Ovary (tissue), 10 donors: ENCODE measurements at regions of chr10 and their contacts with region 1.

Region 1: GRCh38 chr10:111598436-111599059 is 521.7 kb downstream of the ADRA2A start:
- DNase-seq: peak; percentile 10 to 57 (median 34)
- H3K4me3 ChIP-seq: no peak overlapping the region
- H3K27ac ChIP-seq: no peak overlapping the region
- H3K4me1 ChIP-seq: no peaks in the 10 kb centered on the region
- H3K27me3 ChIP-seq: no peaks in the 10 kb centered on the region
- CTCF ChIP-seq: peak; percentile 41 to 52 (median 44)
- EP300 ChIP-seq: no peak
- POLR2A ChIP-seq: no peak

Region 2: GRCh38 chr10:109906316-109906715 is 1692.2 kb before region 1 on chr10:
- intact Hi-C with region 1: loop called in 1 of 4 experiments (anchors 5 kb)
- DNase-seq: no peak
- H3K4me3 ChIP-seq: no peak overlapping the region
- H3K27ac ChIP-seq: no peak overlapping the region
- H3K4me1 ChIP-seq: peaks cover 13% of the 10 kb centered on the region
- H3K27me3 ChIP-seq: no peaks in the 10 kb centered on the region
- CTCF ChIP-seq: no peak
- EP300 ChIP-seq: no peak
- POLR2A ChIP-seq: no peak

Region 3: DNA sequence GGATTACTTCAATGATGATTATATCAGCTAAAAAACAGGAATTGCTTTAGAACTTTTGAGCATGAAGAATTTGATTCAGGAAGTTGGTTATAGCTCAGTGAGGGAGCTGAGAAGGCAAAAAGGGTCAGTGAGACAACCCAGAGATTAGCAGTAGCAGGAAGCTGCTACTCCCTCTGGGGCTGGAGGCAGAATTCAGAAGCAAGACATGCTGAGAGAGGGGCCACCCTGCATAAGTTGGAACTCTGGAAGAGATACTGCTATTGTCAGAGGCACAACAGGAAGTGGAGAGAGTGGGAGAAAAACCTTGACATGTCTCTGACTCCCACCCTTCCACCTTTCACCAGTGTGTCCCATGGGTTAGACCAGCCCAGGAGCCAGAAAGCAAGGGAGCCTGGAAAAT is 33.0 kb before region 1 on chr10:
- intact Hi-C with region 1: loop called in 1 of 4 experiments (anchors 2 kb)
- DNase-seq: no peak
- H3K4me3 ChIP-seq: no peak overlapping the region
- H3K27ac ChIP-seq: no peak overlapping the region
- H3K4me1 ChIP-seq: no peaks in the 10 kb centered on the region
- H3K27me3 ChIP-seq: no peaks in the 10 kb centered on the region
- CTCF ChIP-seq: no peak
- EP300 ChIP-seq: no peak
- POLR2A ChIP-seq: no peak

Region 4: GRCh38 chr10:111879969-111880368 is 281.4 kb after region 1 on chr10:
- intact Hi-C with region 1: no loop called
- DNase-seq: no peak
- H3K4me3 ChIP-seq: no peak overlapping the region
- H3K27ac ChIP-seq: no peak overlapping the region
- H3K4me1 ChIP-seq: no peaks in the 10 kb centered on the region
- H3K27me3 ChIP-seq: no peaks in the 10 kb centered on the region
- CTCF ChIP-seq: no peak
- EP300 ChIP-seq: no peak
- POLR2A ChIP-seq: no peak

Region 5: GRCh38 chr10:112026438-112026837 is 427.9 kb after region 1 on chr10:
- intact Hi-C with region 1: no loop called
- DNase-seq: no peak
- H3K4me3 ChIP-seq: no peak overlapping the region
- H3K27ac ChIP-seq: no peak overlapping the region
- H3K4me1 ChIP-seq: no peaks in the 10 kb centered on the region
- H3K27me3 ChIP-seq: peaks cover 3% of the 10 kb centered on the region
- CTCF ChIP-seq: no peak
- EP300 ChIP-seq: no peak
- POLR2A ChIP-seq: no peak